B cell (primary cell): ENCODE measurements at regions of chr1 and their contacts with region 1.

Region 1: DNA sequence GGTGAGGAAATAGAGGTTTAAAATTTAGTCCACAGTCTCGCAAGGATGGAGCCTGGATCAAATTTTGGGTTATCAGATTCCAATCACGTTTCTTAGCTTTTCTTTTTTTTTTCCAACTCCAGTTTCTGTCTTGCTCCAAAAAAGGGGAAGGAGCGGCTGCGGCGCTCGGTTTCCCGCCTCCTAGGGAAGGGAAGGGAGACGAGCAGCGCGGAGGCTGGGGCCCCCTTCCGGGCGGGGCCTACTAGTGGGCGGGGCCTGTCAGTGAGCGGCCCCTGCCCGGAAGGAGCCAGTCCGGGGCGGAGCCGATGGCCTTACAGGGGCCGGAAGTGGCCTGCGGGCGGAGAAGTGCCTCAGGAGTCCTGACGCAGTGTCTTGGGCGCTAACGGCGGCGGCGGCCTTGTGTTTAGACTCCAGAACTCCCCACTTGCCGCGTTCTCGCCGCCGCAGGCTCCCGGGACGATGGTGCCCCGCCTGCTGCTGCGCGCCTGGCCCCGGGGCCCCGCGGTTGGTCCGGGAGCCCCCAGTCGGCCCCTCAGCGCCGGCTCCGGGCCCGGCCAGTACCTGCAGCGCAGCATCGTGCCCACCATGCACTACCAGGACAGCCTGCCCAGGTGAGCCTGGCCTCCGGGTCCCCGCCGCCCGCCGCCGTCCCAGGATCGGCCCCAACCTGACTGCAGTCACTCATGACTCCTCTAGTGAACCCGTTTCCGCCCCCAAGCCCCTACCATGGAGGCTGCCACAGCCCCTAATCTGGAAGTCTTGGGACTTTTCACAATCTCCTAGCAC is at the start of gene CPT2:
- DNase-seq: peak; percentile 88
- ATAC-seq: peak; percentile 99
- H3K4me3 ChIP-seq: peak within 1 kb of the TSS; percentile 72 to 91 (median 76)
- H3K4me3 Mint-ChIP-seq: peak within 1 kb of the TSS; percentile 97
- H3K27ac ChIP-seq: peak within 1 kb of the TSS; percentile 81 to 96
- H3K27ac Mint-ChIP-seq: peak within 1 kb of the TSS; percentile 95
- H3K4me1 ChIP-seq: peaks cover 16 to 20% of the 10 kb centered on the region in 2 donors
- H3K4me1 Mint-ChIP-seq: peaks cover 28% of the 10 kb centered on the region
- H3K27me3 ChIP-seq: no peaks in the 10 kb centered on the region
- H3K27me3 Mint-ChIP-seq: no peaks in the 10 kb centered on the region
- CTCF ChIP-seq: no peak
- total RNA-seq, gene CPT2: 16.7 and 19.8 TPM in 2 replicates

Region 2: GRCh38 chr1:53182111-53182593 is 14.5 kb before region 1 on chr1:
- CTCF ChIA-PET with region 1: interaction called, 27 read pairs
- POLR2A ChIA-PET with region 1: no interaction called
- intact Hi-C with region 1: no loop called
- DNase-seq: peak; percentile 82
- ATAC-seq: peak; percentile 61
- H3K4me3 ChIP-seq: no peak overlapping the region
- H3K4me3 Mint-ChIP-seq: no peak overlapping the region
- H3K27ac ChIP-seq: no peak overlapping the region
- H3K27ac Mint-ChIP-seq: no peak overlapping the region
- H3K4me1 ChIP-seq: peaks cover 0 to 6% of the 10 kb centered on the region in 2 donors
- H3K4me1 Mint-ChIP-seq: no peaks in the 10 kb centered on the region
- H3K27me3 ChIP-seq: peaks cover 0 to 25% (median 7%) of the 10 kb centered on the region in 4 experiments
- H3K27me3 Mint-ChIP-seq: peaks cover 34% of the 10 kb centered on the region
- CTCF ChIP-seq: peak; percentile 97

Region 3: DNA sequence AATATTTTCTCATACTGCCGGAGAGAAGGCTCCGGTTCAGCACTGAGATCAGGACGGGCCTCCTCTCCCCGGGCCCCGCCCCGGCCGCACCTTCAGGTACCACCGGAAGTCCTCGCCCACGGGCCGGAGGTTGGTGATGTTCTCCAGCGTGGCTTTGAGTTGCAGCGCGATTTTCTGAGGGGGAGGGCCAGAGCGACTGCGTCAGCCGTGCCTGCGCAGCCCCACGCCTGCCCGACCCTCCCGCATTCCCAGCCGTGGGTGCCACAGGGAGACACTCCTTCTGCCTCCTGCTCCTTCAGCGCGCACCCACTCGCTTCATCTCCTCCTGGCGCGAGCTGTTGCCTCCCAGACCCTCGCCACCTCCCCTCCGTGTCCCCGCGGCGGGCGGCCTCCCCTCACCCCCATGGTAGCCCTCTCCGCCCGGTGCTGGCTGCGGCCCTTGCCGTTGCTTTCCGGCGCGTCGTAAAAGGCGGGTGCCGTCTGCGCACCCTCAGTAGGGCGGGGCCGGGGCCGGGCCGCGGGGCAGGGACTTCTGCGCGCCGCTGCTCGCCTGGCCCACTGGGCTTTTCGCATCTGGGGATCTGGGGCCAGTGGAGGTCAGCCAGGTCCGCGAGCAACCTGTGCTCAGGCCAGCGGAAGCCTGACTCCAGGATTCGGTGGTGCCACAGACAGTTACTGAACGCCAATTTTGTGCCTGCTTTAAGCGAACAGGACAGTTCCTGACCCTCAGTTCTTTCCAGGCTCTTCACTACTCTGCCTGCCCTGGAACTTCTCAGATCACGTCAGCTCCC is 23.7 kb after region 1 on chr1 and contains the start of gene CZIB:
- CTCF ChIA-PET with region 1: no interaction called
- POLR2A ChIA-PET with region 1: interaction called, 5 read pairs
- intact Hi-C with region 1: loop called (anchors 1 kb)
- DNase-seq: peak; percentile 96
- ATAC-seq: peak; percentile 92
- H3K4me3 ChIP-seq: peak within 1 kb of the TSS; percentile 43 to 91 (median 66)
- H3K4me3 Mint-ChIP-seq: peak within 1 kb of the TSS; percentile 97
- H3K27ac ChIP-seq: peak within 1 kb of the TSS; percentile 85 to 87
- H3K27ac Mint-ChIP-seq: peak within 1 kb of the TSS; percentile 99
- H3K4me1 ChIP-seq: peaks cover 13 to 17% of the 10 kb centered on the region in 2 donors
- H3K4me1 Mint-ChIP-seq: peaks cover 20% of the 10 kb centered on the region
- H3K27me3 ChIP-seq: no peaks in the 10 kb centered on the region
- H3K27me3 Mint-ChIP-seq: no peaks in the 10 kb centered on the region
- CTCF ChIP-seq: no peak
- total RNA-seq, gene CZIB: 62.0 and 62.1 TPM in 2 replicates

Region 4: GRCh38 chr1:53238197-53239155 is 41.8 kb after region 1 on chr1 and contains the start of gene MAGOH:
- CTCF ChIA-PET with region 1: no interaction called
- POLR2A ChIA-PET with region 1: no interaction called
- intact Hi-C with region 1: loop called (anchors 1 kb)
- DNase-seq: peak; percentile 95
- ATAC-seq: peak; percentile 99
- H3K4me3 ChIP-seq: peak within 1 kb of the TSS; percentile 94 to 98 (median 98)
- H3K4me3 Mint-ChIP-seq: peak within 1 kb of the TSS; percentile 99
- H3K27ac ChIP-seq: peak within 1 kb of the TSS; percentile 70 to 89
- H3K27ac Mint-ChIP-seq: peak within 1 kb of the TSS; percentile 96
- H3K4me1 ChIP-seq: peaks cover 18 to 26% of the 10 kb centered on the region in 2 donors
- H3K4me1 Mint-ChIP-seq: peaks cover 29% of the 10 kb centered on the region
- H3K27me3 ChIP-seq: no peaks in the 10 kb centered on the region
- H3K27me3 Mint-ChIP-seq: no peaks in the 10 kb centered on the region
- CTCF ChIP-seq: no peak
- total RNA-seq, gene MAGOH: 36.2 and 45.6 TPM in 2 replicates